ENCODE measurements at regions of chr7 and their contacts with region 1.

Region 1: GRCh38 chr7:47846117-47846836 is 102.0 kb downstream of the PKD1L1 start:
- DNase-seq: peak; percentile 93
- ATAC-seq: peak; percentile 80
- H3K4me3 ChIP-seq: peak overlapping the region; percentile 11; the same call in 1 of the 2 replicates
- H3K27ac ChIP-seq: peak overlapping the region; percentile 84
- H3K4me1 ChIP-seq: peaks cover 41% of the 10 kb centered on the region
- H3K27me3 ChIP-seq: no peaks in the 10 kb centered on the region
- CTCF ChIP-seq: no peak

Region 2: GRCh38 chr7:47901542-47901941 is 55.3 kb after region 1 on chr7:
- CTCF ChIA-PET with region 1: no interaction called
- POLR2A ChIA-PET with region 1: no interaction called
- intact Hi-C with region 1: loop called (anchors 5 kb)
- DNase-seq: peak; percentile 62
- ATAC-seq: peak; percentile 56
- H3K4me3 ChIP-seq: no peak overlapping the region
- H3K27ac ChIP-seq: no peak overlapping the region
- H3K4me1 ChIP-seq: peaks cover 12% of the 10 kb centered on the region
- H3K27me3 ChIP-seq: no peaks in the 10 kb centered on the region
- CTCF ChIP-seq: no peak

Region 3: GRCh38 chr7:47937065-47937683 is 90.9 kb after region 1 on chr7:
- CTCF ChIA-PET with region 1: no interaction called
- POLR2A ChIA-PET with region 1: no interaction called
- intact Hi-C with region 1: loop called (anchors 2 kb)
- DNase-seq: no peak
- ATAC-seq: no peak
- H3K4me3 ChIP-seq: no peak overlapping the region
- H3K27ac ChIP-seq: no peak overlapping the region
- H3K4me1 ChIP-seq: peaks cover 14% of the 10 kb centered on the region
- H3K27me3 ChIP-seq: no peaks in the 10 kb centered on the region
- CTCF ChIP-seq: no peak

Region 4: DNA sequence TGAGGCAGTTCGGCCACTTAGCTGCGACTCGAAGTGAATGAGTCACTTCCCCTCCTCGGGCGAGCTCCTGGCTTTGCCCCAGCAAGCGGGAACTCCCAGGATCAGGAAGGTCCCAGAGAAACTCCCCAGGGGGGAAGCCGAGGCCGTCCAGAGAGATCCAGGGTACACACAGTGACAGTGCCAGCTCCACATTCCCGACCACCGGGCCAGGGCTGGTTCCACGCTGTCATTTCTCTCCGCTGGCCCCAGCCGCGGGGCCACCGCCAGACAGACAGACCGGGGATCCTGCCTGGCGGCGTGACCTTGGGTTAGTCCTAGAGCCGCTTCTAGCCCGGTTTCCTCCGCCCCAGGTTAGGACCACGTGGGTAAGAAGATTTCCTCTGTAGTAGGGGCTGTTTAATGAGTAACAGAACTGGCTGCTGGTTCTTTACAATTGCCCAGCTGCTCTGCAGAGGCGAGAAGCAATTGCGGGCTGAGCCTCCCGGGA is 242.3 kb after region 1 on chr7:
- CTCF ChIA-PET with region 1: no interaction called
- POLR2A ChIA-PET with region 1: no interaction called
- intact Hi-C with region 1: loop called (anchors 10 kb)
- DNase-seq: peak; percentile 83
- ATAC-seq: peak; percentile 33
- H3K4me3 ChIP-seq: peak overlapping the region; percentile 94
- H3K27ac ChIP-seq: peak overlapping the region; percentile 99
- H3K4me1 ChIP-seq: peaks cover 56% of the 10 kb centered on the region
- H3K27me3 ChIP-seq: no peaks in the 10 kb centered on the region
- CTCF ChIP-seq: no peak